Psoas muscle (tissue), 8 donors: ENCODE measurements at regions of chr1 and their contacts with region 1.

Region 1: DNA sequence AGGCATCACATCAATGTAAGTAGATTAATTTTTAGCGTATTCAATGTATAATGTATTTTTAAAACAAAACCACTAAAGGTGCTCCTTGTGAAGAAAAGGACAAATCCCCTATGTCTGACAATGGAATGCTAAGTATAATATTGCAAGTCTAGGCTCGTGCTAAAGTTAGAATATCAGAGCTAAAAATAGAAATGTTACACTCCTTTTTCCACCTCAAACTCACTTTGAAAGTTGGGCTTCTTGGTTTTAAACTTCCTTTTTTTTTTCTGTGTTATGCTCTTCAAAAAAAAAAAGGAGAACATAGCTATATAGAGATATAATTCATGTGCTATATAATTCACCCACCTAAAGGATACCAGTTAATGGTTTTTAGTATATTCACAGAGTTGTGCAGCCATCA is 3.6 kb upstream of the SERBP1 start:
- DNase-seq: no peak
- ATAC-seq: no peak
- H3K4me3 ChIP-seq: no peak overlapping the region
- H3K27ac ChIP-seq: peak overlapping the region; percentile 91
- H3K4me1 ChIP-seq: peaks cover 37% of the 10 kb centered on the region
- H3K27me3 ChIP-seq: no peaks in the 10 kb centered on the region
- CTCF ChIP-seq: no peak

Region 2: GRCh38 chr1:67097305-67097704 is 336.5 kb before region 1 on chr1:
- intact Hi-C with region 1: no loop called
- DNase-seq: no peak
- ATAC-seq: no peak
- H3K4me3 ChIP-seq: no peak overlapping the region
- H3K27ac ChIP-seq: no peak overlapping the region
- H3K4me1 ChIP-seq: no peaks in the 10 kb centered on the region
- H3K27me3 ChIP-seq: no peaks in the 10 kb centered on the region
- CTCF ChIP-seq: no peak

Region 3: GRCh38 chr1:67459068-67459467 is 25.2 kb after region 1 on chr1:
- intact Hi-C with region 1: loop called in 1 of 2 experiments (anchors 2 kb)
- DNase-seq: no peak
- ATAC-seq: no peak
- H3K4me3 ChIP-seq: no peak overlapping the region
- H3K27ac ChIP-seq: peak overlapping the region; percentile 81
- H3K4me1 ChIP-seq: peaks cover 43% of the 10 kb centered on the region
- H3K27me3 ChIP-seq: no peaks in the 10 kb centered on the region
- CTCF ChIP-seq: no peak

Region 4: DNA sequence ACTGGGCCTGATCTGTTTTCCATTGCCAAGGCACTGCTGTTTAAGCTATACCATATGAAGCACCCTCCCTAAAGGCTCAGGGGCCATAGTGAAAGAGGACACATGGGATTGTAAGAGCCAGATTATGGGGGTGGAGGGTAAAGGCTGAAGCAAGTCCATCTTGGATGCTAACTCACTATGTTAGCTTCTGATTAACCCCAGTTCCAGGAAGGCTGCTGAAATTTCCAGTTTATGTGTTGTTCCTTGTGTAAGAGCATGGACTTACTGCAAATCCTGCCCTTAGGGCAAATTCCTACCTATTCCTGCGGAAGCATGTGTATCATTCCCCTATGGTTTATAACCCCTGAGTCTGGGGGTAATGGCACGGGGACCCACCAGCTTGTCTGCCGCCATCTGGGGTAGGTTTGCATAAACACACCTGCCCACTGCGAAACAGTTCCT is 88.2 kb after region 1 on chr1:
- intact Hi-C with region 1: no loop called
- DNase-seq: no peak
- ATAC-seq: no peak
- H3K4me3 ChIP-seq: no peak overlapping the region
- H3K27ac ChIP-seq: no peak overlapping the region
- H3K4me1 ChIP-seq: no peaks in the 10 kb centered on the region
- H3K27me3 ChIP-seq: no peaks in the 10 kb centered on the region
- CTCF ChIP-seq: no peak

Region 5: DNA sequence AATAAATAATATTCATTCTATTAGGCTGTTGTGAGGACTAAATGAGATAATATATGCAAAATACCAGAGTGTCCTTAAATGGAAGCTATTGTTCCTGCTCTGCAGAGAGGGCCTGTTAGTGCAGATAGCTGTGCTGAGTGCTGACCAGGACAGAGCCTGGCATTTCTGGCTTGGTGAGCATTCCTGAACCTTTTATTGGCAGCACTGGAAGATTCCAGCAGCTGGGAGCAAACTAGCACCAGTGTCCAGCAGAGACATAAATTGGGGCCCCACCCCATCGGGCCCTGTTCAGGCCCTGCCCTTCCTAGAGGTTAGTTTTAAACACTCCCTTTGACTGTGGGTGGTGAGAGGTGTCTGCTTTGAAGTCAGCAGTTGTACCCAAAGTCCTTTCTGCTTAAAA is 165.2 kb after region 1 on chr1:
- intact Hi-C with region 1: no loop called
- DNase-seq: no peak
- ATAC-seq: peak in 3 of 4 donors; percentile 39 to 44 (median 44)
- H3K4me3 ChIP-seq: no peak overlapping the region
- H3K27ac ChIP-seq: no peak overlapping the region
- H3K4me1 ChIP-seq: no peaks in the 10 kb centered on the region
- H3K27me3 ChIP-seq: peaks cover 0 to 2% (median 0%) of the 10 kb centered on the region in 3 donors
- CTCF ChIP-seq: no peak